Activated B cell treated with CpG ODN at 0.5 μM for 24 hours (primary cell): ENCODE measurements at regions of chr2 and their contacts with region 1.

Region 1: GRCh38 chr2:61426267-61426897 is 44.5 kb downstream of the USP34 start:
- DNase-seq: peak; percentile 62
- ATAC-seq: peak; percentile 89
- H3K4me3 Mint-ChIP-seq: peak overlapping the region; percentile 19
- H3K27ac Mint-ChIP-seq: peak overlapping the region; percentile 92
- H3K4me1 Mint-ChIP-seq: peaks cover 69% of the 10 kb centered on the region
- H3K27me3 Mint-ChIP-seq: no peaks in the 10 kb centered on the region
- CTCF ChIP-seq: no peak

Region 2: GRCh38 chr2:61109291-61109690 is 317.1 kb before region 1 on chr2:
- CTCF ChIA-PET with region 1: no interaction called
- POLR2A ChIA-PET with region 1: no interaction called
- intact Hi-C with region 1: no loop called
- DNase-seq: no peak
- ATAC-seq: no peak
- H3K4me3 Mint-ChIP-seq: no peak overlapping the region
- H3K27ac Mint-ChIP-seq: no peak overlapping the region
- H3K4me1 Mint-ChIP-seq: no peaks in the 10 kb centered on the region
- H3K27me3 Mint-ChIP-seq: no peaks in the 10 kb centered on the region
- CTCF ChIP-seq: no peak

Region 3: GRCh38 chr2:61443342-61444041 is 17.1 kb after region 1 on chr2:
- CTCF ChIA-PET with region 1: interaction called, 14 read pairs
- POLR2A ChIA-PET with region 1: interaction called, 8 read pairs
- intact Hi-C with region 1: loop called (anchors 2 kb)
- DNase-seq: no peak
- ATAC-seq: peak; percentile 84
- H3K4me3 Mint-ChIP-seq: peak overlapping the region; percentile 44
- H3K27ac Mint-ChIP-seq: peak overlapping the region; percentile 78
- H3K4me1 Mint-ChIP-seq: peaks cover 79% of the 10 kb centered on the region
- H3K27me3 Mint-ChIP-seq: no peaks in the 10 kb centered on the region
- CTCF ChIP-seq: no peak

Region 4: DNA sequence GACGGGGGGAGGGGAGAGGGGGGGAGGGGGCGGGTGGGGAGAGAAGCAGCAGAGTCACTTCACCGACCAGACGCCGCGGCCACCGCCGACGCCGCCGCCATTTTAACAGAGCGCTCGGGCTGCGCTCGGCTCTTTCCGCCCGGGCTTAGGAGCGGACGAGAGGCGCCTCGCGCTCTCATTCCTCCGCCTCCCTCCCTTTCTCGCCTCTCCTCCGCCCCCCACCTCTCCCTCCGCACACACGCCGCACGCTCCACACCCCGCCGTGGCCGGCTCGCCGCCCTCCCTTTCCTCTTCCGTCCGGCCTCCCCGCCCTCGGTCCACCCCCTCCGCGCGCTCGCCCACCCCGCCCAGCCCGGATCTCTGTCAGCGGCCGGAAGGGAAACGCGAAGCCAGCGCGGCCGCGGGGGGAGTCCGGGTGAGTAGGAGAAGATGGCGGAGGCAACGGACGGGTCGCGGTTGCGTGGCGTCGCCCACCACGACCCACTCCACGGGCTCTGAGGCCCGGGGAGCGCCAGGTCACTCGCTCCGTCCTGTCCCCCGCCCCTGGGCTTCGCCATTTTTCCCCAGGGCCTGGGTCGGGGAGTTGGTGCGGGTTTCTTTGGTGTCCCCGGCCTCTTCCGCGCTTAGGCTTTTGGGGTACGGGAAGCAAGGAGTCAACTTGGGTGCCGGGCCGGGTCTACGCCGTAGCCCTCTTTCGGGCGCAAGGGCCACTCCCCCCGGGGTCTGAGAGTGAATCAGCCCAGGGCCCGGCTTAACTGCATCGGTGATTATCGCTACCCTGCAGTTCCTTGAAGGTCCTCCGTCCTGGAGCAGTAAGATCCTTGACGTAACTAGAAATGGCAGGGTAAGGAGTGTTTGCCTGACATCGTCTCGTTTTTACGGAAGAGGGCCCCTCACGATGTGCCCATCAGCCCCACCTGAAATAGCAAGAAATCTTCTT is 44.9 kb after region 1 on chr2 and contains the start of gene USP34:
- CTCF ChIA-PET with region 1: interaction called, 27 read pairs
- POLR2A ChIA-PET with region 1: interaction called, 26 read pairs
- intact Hi-C with region 1: loop called (anchors 1 kb)
- DNase-seq: peak; percentile 79
- ATAC-seq: peak; percentile 82
- H3K4me3 Mint-ChIP-seq: peak within 1 kb of the TSS; percentile 95
- H3K27ac Mint-ChIP-seq: peak within 1 kb of the TSS; percentile 95
- H3K4me1 Mint-ChIP-seq: peaks cover 38% of the 10 kb centered on the region
- H3K27me3 Mint-ChIP-seq: no peaks in the 10 kb centered on the region
- CTCF ChIP-seq: no peak
- total RNA-seq, gene USP34: 142 and 176 TPM in 2 replicates

Region 5: GRCh38 chr2:61493523-61493942 is 67.2 kb after region 1 on chr2:
- CTCF ChIA-PET with region 1: interaction called, 9 read pairs
- POLR2A ChIA-PET with region 1: interaction called, 3 read pairs
- intact Hi-C with region 1: loop called (anchors 2 kb)
- DNase-seq: no peak
- ATAC-seq: no peak
- H3K4me3 Mint-ChIP-seq: no peak overlapping the region
- H3K27ac Mint-ChIP-seq: peak overlapping the region; percentile 73
- H3K4me1 Mint-ChIP-seq: peaks cover 17% of the 10 kb centered on the region
- H3K27me3 Mint-ChIP-seq: no peaks in the 10 kb centered on the region
- CTCF ChIP-seq: no peak

Region 6: DNA sequence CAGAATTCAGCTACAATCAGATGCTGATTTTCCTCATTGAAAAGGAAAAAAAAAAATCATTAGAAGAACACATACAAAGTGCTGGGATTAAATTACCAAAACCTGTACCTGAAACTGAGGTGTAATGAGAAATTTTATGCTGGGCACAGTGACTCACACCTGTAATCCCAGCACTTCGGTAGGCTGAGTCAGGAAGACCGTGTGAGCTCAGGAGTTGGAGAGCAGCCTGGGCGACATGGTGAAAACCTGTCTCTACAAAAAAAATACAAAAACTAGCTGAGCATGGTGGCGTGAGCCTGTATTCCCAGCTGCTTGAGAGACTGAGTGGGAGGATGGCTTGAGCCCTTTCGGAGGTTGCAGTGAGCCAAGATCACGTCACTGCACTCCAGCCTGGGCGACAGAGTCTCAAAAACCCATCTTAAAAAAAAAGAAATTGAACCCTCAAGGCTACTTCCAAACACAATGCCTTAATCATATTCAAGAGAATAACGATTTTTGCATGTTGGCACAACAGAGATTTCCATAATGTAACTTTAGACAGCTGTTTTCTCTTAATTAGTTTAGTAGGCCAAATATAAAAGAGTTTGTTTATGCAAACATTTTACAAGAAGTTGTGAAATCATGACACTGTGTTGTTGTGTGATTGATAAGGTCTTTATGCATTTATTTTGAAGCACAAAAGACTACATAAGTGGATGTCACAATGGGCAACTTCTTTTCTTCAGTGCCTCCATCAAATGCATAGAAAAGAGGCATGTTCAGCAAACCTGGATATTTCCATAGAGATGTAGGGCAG is 363.6 kb after region 1 on chr2:
- CTCF ChIA-PET with region 1: interaction called, 4 read pairs
- POLR2A ChIA-PET with region 1: no interaction called
- intact Hi-C with region 1: loop called (anchors 1 kb)
- DNase-seq: no peak
- ATAC-seq: no peak
- H3K4me3 Mint-ChIP-seq: no peak overlapping the region
- H3K27ac Mint-ChIP-seq: no peak overlapping the region
- H3K4me1 Mint-ChIP-seq: peaks cover 5% of the 10 kb centered on the region
- H3K27me3 Mint-ChIP-seq: peaks cover 9% of the 10 kb centered on the region
- CTCF ChIP-seq: no peak